PC-9 (cell line): ENCODE measurements at regions of chr6 and their contacts with region 1.

Region 1: GRCh38 chr6:42879372-42880239 is at the start of gene RPL7L1:
- DNase-seq: peak; percentile 74 to 84
- H3K4me3 ChIP-seq: peak within 1 kb of the TSS; percentile 96
- H3K27ac ChIP-seq: peak within 1 kb of the TSS; percentile 91
- H3K4me1 ChIP-seq: peaks cover 10% of the 10 kb centered on the region
- H3K27me3 ChIP-seq: no peaks in the 10 kb centered on the region
- CTCF ChIP-seq: 0 out of 2 replicates have a peak, but pooled peaks have one; percentile 14
- total RNA-seq, gene RPL7L1: 84.1 and 87.1 TPM in 2 replicates

Region 2: DNA sequence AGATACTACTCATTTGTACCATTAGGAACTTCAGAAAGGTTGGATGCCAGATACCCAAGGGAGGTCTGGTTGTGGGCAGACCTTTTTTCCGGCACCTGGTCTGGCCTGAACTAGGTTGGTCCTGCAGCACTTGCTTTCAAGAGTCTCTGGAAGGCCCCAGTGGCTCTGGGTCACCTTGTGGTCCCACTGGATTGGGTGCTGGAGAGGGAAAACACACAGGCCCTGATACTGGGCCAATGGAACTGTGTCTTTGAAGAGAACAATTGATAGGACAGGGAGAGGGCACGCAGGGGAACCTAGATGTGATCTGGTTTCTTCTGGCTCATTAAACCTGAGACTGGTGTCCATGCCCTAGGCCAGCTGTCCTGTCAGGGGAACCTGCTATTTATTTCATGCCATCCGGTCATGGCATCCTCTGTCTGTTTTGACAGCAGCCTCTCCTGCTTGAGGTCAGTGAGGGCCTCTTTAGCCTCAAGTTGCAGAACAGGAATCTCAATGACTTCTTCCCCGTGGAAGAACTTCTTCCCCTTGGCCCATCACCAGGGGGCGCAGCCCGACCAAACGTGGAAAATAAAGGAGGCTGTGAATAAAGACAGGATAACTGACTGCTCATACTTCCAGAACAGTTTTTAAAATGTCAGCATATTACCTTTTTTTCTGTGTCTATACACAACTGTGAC is 804.3 kb before region 1 on chr6:
- CTCF ChIA-PET with region 1: no interaction called
- POLR2A ChIA-PET with region 1: no interaction called
- intact Hi-C with region 1: loop called (anchors 10 kb)
- DNase-seq: peak; percentile 72 to 87
- H3K4me3 ChIP-seq: no peak overlapping the region
- H3K27ac ChIP-seq: no peak overlapping the region
- H3K4me1 ChIP-seq: 0 out of 2 replicates have a peak, but pooled peaks cover 4% of the 10 kb centered on the region
- H3K27me3 ChIP-seq: no peaks in the 10 kb centered on the region
- CTCF ChIP-seq: peak; percentile 95

Region 3: GRCh38 chr6:42661540-42662153 is 218.0 kb before region 1 on chr6:
- CTCF ChIA-PET with region 1: no interaction called
- POLR2A ChIA-PET with region 1: no interaction called
- intact Hi-C with region 1: loop called (anchors 1 kb)
- DNase-seq: peak; percentile 45 to 63
- H3K4me3 ChIP-seq: no peak overlapping the region
- H3K27ac ChIP-seq: no peak overlapping the region
- H3K4me1 ChIP-seq: no peaks in the 10 kb centered on the region
- H3K27me3 ChIP-seq: no peaks in the 10 kb centered on the region
- CTCF ChIP-seq: peak; percentile 93

Region 4: DNA sequence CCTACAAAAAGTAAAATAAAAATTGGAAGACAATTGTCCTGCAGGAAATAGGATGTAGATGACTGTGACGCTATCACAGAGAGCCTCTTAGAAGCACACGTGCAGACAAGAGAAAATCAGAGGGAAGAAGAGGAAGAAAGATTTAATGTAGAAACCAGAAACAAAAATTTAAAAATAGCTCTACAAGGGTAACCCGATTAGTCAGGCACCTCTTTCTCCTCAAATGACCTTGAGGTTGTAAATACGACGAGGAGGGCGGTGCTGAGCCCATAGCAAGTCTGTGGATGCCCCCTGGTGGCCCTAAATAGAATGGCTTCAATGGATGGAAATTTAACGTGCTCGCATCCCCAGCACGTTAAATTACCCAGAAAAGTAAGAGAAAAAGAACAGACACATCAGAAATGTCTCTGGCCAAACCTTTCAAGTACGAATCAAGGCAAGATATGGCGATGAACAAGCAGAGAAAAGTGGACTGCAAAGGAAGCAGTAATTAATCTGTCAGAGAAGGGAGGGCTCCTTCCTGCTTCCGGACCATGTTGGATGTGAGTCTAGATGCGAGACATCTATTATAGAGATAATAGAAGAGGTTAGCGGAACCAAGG is 153.0 kb before region 1 on chr6:
- CTCF ChIA-PET with region 1: no interaction called
- POLR2A ChIA-PET with region 1: no interaction called
- intact Hi-C with region 1: loop called (anchors 1 kb)
- DNase-seq: peak in 1 of 2 experiments; percentile 47
- H3K4me3 ChIP-seq: no peak overlapping the region
- H3K27ac ChIP-seq: no peak overlapping the region
- H3K4me1 ChIP-seq: 0 out of 2 replicates have a peak, but pooled peaks cover 6% of the 10 kb centered on the region
- H3K27me3 ChIP-seq: no peaks in the 10 kb centered on the region
- CTCF ChIP-seq: peak; percentile 95

Region 5: DNA sequence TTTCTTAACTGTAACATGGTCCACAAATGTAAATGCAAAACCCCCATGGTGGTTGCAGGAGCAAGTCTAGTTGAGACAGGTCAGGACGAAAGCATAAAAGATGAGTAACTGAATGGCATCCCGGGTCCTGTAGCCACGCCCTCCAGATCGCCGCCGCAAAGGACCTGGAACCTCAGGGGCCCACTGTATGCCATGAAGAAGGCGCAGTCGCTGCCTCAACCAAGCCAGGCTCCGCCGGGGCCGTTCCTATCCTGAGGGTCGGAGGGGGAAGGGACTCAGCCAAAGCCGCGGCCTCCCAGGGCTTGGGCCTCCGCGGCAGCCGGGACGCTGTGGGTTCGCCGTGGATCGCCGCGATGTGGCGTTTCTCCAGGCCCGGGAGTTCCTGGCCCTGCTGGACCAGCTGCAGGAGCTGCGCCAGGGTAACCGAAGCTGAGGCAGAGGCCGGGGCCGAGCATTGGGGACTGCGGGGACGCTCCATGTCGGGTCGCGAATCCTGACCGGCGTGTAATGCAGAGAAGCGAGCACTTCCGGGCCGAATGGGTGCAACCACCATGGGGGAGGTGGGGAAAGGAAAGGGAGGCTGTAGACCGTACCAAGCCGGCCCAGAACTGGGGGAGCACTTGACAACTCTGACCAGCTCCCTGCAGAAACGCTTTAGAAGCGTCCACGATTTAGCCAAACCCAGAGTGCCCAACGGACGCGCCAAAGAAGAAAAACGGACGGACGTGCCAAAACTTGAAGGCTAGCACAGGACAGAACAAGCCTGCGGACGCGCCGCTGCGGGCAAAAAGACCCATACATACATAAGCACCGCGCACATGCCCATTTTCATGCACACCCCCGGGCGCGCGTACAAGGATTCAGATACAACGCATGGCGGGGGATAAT is 10.9 kb after region 1 on chr6:
- CTCF ChIA-PET with region 1: interaction called, 17 read pairs
- POLR2A ChIA-PET with region 1: interaction called, 3 read pairs
- intact Hi-C with region 1: no loop called
- DNase-seq: peak; percentile 87 to 93
- H3K4me3 ChIP-seq: peak overlapping the region; percentile 80
- H3K27ac ChIP-seq: peak overlapping the region; percentile 89
- H3K4me1 ChIP-seq: peaks cover 17% of the 10 kb centered on the region; the same call in 1 of the 2 replicates
- H3K27me3 ChIP-seq: no peaks in the 10 kb centered on the region
- CTCF ChIP-seq: no peak